ENCODE measurements at regions of chr19 and their contacts with region 1.

Region 1: DNA sequence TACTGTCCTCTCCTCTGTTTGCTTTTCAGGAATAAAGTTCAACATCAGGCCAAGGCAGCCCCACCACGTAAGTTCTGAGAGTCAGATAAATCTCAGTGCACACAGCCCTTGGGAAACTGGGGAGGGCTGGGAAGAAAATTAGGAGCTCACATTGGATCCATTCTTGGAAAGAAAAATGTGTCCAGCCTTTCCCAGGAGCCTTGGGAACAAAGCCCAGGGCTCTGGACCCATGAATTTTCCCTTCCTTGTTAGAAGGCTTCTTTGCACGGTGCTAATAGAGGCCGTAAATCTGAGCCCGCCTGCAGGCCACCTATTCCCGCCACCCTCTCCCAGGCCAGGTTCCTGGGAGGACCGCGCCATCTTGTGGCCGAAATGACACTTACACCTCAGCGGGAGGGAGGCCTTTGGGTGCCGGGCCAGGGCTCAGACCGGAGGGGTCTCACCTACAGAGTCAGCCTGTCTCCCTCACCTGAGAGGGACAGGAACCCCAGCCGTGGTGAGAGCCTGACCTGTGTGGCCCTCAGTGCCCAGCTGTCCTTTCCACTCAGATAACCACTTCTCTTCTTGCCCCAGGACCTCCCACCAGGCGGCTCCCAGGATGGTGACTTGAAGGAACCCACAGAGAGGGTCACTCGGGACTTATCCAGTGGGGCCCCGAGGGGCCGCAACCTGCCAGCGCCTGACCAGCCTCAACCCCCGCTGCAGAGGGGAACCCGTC is 25.1 kb upstream of the KCTD15 start:
- DNase-seq: no peak
- ATAC-seq: peak; percentile 58

Region 2: GRCh38 chr19:33235269-33235995 is 536.1 kb before region 1 on chr19:
- intact Hi-C with region 1: loop called (anchors 5 kb)
- DNase-seq: peak; percentile 90
- ATAC-seq: peak; percentile 56

Region 3: DNA sequence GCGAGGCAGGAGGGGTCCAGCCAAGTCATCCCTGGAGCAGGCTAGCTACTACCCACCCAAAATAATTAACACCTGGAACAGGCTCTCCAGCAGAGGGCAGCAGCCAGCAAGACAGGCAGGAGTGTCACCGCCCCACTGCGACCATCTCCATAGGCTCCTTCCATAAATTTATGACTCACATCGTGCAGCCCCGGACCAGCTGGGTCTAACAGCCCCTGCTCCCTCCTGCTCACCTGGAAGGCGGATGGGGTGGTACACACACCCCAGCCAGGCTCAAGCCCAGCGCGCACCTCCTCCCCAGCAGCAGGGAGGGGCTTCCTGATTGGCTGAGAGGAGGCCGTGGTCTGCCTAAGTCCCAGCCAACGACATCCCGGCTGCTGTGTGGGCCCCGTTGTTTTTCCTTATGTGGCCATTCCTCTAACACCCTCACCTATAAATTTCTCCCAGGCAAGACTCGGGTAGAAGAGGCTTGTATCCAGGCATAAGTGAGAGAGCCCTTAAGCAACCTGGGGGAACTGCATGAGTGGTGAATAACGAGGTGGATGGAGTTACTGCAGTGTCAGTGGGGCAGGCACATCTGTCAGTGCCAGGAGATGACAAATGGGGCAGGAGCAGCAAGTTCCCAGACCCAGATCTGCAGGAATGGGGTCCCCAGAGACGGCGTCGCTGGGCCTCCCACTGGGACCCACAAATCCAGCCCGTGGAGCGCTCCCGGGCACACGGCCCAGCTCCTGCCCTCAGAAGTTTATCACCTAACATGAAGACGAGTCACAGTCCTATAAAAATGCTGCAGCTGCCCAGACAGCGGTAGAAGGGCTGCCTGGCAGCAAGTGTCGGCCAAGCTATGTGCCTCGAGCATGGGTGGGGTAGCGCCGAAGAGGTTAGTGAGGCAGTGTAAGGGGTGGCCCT is 355.0 kb before region 1 on chr19:
- intact Hi-C with region 1: loop called (anchors 5 kb)
- DNase-seq: peak; percentile 72
- ATAC-seq: peak; percentile 27

Region 4: DNA sequence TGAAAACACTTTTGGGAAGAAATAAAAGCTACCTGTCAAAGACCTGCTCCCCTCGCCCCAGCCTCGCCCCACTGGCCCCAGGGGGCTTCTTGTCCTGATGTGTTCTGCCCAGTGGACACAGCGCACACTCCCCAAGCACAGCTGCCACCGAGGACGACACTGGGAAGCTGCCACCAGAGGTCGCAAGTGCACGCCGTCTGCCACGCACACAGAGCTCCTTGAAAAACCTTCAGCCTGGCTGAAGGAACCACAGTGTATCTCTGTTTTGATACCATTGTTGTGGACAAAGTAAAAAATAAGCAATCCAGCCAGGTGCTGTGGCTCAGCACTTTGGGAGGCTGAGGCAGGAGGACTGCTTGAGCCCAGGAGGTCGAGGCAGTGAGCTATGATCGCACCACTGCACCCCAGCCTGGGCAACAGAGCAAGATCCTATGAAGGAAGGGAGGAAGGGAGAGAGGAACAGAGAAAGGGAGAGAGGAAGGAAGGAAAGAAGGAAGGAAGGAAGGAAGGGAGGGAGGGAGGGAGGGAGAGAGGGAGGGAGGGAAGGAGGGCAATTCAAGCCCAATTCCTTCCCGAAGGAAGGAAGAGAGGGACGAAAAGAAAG is 340.8 kb before region 1 on chr19:
- intact Hi-C with region 1: loop called (anchors 1 kb)
- DNase-seq: no peak
- ATAC-seq: peak; percentile 80

Region 5: GRCh38 chr19:33712268-33712667 is 59.3 kb before region 1 on chr19:
- intact Hi-C with region 1: no loop called
- DNase-seq: no peak
- ATAC-seq: no peak

Region 6: DNA sequence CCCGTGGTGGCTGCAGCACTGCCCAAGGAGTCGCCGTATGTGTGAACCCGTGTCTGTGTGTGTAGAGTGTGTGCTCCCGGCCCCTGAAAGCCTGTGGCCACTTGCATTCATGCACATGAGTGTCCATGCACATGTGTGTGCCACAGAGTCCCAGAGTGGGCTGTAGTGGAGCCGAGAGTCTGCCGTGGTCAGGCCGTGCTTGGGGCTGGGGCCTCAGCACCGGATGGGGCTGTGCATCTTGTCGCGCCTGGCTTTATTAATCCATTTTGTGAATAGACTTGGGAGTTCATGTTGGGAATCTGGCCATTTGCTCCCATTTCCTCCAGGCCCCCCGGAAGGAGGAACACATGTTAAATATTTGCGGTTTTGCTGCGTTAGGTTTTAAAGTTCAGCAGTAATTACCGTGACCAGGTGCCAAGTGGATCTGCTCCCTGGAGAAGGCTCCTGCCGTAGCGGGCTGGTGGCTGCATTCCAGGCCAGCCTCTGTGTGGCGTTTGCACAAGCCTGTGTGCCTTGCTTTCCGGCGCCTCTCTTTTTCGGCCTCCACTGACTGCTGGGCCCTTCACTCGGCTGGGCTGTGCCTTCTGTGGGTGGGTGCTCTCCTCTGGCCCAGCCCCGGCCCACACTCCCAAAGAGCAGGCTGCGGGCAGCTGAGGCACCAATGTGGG is 44.1 kb before region 1 on chr19:
- intact Hi-C with region 1: no loop called
- DNase-seq: no peak
- ATAC-seq: no peak